Psoas muscle (tissue), 8 donors: ENCODE measurements at regions of chr9 and their contacts with region 1.

Region 1: GRCh38 chr9:113275157-113276131 is at the starts of genes CDC26 and PRPF4:
- DNase-seq: peak; percentile 96 to 98
- ATAC-seq: peak; percentile 98 to 99 (median 99)
- H3K4me3 ChIP-seq: peak within 1 kb of the TSS; percentile 95
- H3K27ac ChIP-seq: peak within 1 kb of the TSS; percentile 96
- H3K4me1 ChIP-seq: peaks cover 17% of the 10 kb centered on the region
- H3K27me3 ChIP-seq: no peaks in the 10 kb centered on the region
- CTCF ChIP-seq: no peak
- total RNA-seq, gene CDC26: 22.4 to 25.6 (median 24.0) TPM
- total RNA-seq, gene PRPF4: 10.9 to 22.5 (median 19.8) TPM

Region 2: DNA sequence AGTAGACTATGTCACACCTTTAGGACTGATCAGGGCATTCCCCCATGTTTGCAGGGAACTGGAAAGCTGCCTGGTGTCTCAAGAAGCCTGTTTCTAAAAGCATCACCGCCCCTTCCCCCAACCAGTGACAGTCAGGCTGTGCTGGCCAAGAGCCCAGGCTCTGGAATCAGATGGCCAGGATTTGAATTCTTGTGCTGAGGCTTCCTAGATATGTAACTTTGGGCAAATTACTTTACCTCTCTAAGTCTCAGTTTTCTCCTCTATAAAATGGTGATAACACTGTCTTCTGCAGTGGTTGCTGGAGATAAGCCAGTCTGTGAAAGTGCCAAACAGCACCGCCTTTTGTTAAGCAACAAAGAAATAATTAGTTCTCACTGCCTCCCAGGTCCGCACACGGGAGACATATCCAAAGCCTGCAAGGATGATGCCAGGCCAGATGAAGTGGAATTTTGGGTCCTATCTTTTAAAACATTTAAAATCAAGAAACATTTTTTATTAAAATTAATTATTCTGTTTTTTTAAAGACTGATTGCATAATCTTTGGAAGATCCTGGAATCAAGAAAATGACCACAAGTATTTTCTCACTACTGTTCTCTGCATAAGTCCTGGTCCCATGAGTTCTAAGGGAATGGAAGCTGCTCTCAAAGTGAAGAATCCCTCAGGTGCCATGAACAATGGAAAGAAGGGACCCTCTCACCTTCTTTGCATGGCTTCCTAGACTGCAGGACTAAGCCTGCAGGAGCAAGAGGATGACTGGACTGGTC is 110.7 kb before region 1 on chr9:
- intact Hi-C with region 1: loop called in 1 of 2 experiments (anchors 10 kb)
- DNase-seq: peak; percentile 65 to 82
- ATAC-seq: peak; percentile 71 to 88 (median 79)
- H3K4me3 ChIP-seq: no peak overlapping the region
- H3K27ac ChIP-seq: no peak overlapping the region
- H3K4me1 ChIP-seq: peaks cover 13% of the 10 kb centered on the region
- H3K27me3 ChIP-seq: no peaks in the 10 kb centered on the region
- CTCF ChIP-seq: no peak

Region 3: GRCh38 chr9:113340017-113340699 is 64.7 kb after region 1 on chr9 and contains the start of gene WDR31:
- intact Hi-C with region 1: loop called (anchors 5 kb)
- DNase-seq: peak; percentile 85 to 91
- ATAC-seq: peak; percentile 97 to 99 (median 98)
- H3K4me3 ChIP-seq: peak within 1 kb of the TSS; percentile 91
- H3K27ac ChIP-seq: peak within 1 kb of the TSS; percentile 61
- H3K4me1 ChIP-seq: peaks cover 3% of the 10 kb centered on the region
- H3K27me3 ChIP-seq: no peaks in the 10 kb centered on the region
- CTCF ChIP-seq: no peak
- total RNA-seq, gene WDR31: 1.7 to 6.9 (median 2.4) TPM

Region 4: DNA sequence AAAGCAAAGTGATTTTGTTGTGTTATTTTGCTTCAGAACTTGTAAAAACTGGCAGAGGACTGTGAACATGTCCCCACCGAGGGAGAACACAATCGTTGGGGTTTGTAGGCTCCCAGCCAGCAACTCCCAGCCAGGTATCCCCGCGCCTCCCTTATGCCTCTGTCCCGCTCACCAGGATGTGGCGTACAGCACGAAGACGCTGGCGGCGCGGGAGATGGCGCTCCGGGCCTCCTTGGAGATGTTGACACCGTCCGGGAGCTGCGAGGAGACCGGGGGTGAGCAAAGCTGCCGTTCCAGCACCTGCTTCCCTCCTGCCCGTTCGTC is 134.4 kb after region 1 on chr9:
- intact Hi-C with region 1: loop called in 1 of 2 experiments (anchors 5 kb)
- DNase-seq: no peak
- ATAC-seq: peak in 3 of 4 donors; percentile 0 to 1 (median 0)
- H3K4me3 ChIP-seq: peak overlapping the region; percentile 95
- H3K27ac ChIP-seq: peak overlapping the region; percentile 97
- H3K4me1 ChIP-seq: peaks cover 5% of the 10 kb centered on the region
- H3K27me3 ChIP-seq: no peaks in the 10 kb centered on the region
- CTCF ChIP-seq: no peak

Region 5: DNA sequence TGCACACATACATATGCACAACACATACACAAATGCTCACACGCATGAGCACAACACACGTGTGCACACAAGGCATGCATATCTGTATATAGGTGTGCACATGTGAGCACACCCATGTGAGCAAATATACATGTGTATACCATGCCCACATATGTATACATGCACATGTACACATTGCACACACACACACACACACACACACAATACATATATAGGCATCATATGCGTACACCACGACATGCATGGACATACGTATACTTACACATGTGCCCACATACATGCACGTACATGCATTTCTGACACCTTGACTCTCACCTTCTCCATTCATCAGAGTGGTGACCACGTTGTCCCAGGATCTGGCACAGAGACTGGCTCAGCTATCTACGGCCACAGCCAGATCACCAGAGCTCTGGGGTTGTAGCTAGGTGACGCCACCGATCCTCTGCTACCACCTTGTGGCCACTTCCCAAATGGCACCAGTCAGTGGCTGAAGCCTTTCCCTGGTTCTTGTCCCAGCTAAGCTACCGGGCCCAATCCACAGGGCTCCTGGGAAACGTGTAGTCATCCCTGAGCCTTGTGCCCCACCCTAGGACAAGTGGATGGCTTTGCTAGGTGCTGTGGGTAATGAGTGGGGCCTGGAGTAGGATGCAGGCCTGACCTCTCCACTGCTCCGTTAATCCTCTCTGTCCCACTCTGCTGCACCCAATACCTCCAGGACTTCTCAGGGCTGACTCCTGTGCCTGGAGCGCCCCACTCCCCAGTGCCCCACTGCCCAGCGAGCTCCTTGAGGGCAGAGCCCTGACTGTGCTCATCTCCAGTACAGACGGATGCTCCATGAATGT is 382.5 kb after region 1 on chr9:
- intact Hi-C with region 1: loop called (anchors 2 to 5 kb)
- DNase-seq: peak; percentile 82 to 91
- ATAC-seq: peak; percentile 85 to 93 (median 90)
- H3K4me3 ChIP-seq: no peak overlapping the region
- H3K27ac ChIP-seq: no peak overlapping the region
- H3K4me1 ChIP-seq: peaks cover 22% of the 10 kb centered on the region
- H3K27me3 ChIP-seq: no peaks in the 10 kb centered on the region
- CTCF ChIP-seq: peak; percentile 97